ENCODE measurements at regions of chr3 and their contacts with region 1.

Region 1: GRCh38 chr3:99833617-99834205 is 16.0 kb downstream of the CMSS1 start:
- ATAC-seq: no peak
- H3K4me3 ChIP-seq: no peak overlapping the region
- H3K27ac ChIP-seq: no peak overlapping the region
- H3K4me1 ChIP-seq: peaks cover 2 to 5% of the 10 kb centered on the region in 2 donors

Region 2: GRCh38 chr3:98801043-98801747 is 1032.5 kb before region 1 on chr3:
- in situ Hi-C with region 1: no loop called
- ATAC-seq: peak in 1 of 8 experiments; percentile 88
- H3K4me3 ChIP-seq: no peak overlapping the region
- H3K27ac ChIP-seq: no peak overlapping the region
- H3K4me1 ChIP-seq: no peaks in the 10 kb centered on the region

Region 3: DNA sequence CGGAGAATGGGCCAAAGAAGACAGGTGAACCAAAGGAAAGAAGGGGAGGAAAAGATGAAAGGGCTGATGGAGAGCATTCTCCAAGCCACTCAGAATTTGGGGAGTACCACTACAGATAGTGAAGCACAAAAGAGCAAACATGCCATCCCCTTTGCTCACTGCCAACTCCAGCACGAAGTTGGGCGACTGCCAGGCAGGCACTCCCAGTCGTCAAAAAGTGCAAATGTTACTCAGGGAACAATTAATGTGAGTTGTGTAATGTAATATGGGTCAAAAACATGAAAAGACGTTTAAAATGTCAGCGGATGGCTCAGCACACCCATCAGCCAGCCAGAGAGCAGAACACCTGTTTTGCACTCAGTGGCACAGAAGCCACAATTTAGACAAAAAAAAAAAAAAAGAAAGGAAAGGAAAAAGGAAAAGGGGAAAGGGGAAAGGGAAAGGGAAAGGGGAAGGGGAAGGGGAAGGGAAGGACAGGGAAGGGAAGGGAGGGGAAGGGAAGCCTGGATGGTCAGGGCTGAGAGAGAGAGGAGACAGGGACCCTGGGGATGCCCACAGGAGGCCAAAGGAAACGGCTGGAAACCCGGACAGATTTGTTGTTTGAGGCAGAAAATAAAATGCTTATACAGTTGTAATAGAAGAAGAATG is 112.6 kb before region 1 on chr3:
- in situ Hi-C with region 1: no loop called
- ATAC-seq: peak in 3 of 8 experiments; percentile 17 to 43 (median 27)
- H3K4me3 ChIP-seq: no peak overlapping the region
- H3K27ac ChIP-seq: no peak overlapping the region
- H3K4me1 ChIP-seq: no peaks in the 10 kb centered on the region

Region 4: DNA sequence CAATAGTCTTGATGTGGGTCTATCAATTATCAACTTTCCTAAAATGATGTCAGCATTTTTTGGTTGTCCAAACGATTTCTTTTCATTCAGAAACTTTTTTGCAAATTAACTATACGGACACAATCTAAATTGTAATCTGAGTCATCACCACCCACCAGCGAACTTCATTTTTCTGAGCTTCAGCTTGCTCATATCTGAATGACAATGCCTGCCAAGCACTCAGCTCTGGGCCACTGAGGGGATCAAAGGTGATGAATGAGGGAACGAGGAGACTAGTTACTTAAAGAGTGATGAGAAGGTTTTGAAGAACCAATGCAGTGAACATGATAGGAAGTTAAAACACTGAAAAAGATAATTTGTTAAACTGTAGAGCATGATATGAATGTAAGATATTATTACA is 412.2 kb after region 1 on chr3:
- in situ Hi-C with region 1: loop called in 6 of 9 experiments (anchors 10 to 25 kb)
- ATAC-seq: peak in 1 of 8 experiments; percentile 37
- H3K4me3 ChIP-seq: no peak overlapping the region
- H3K27ac ChIP-seq: no peak overlapping the region
- H3K4me1 ChIP-seq: no peaks in the 10 kb centered on the region

Region 5: GRCh38 chr3:100254168-100254777 is 420.6 kb after region 1 on chr3:
- in situ Hi-C with region 1: loop called in 6 of 9 experiments (anchors 10 to 25 kb)
- ATAC-seq: peak; percentile 84 to 100 (median 90)
- H3K4me3 ChIP-seq: no peak overlapping the region
- H3K27ac ChIP-seq: no peak overlapping the region
- H3K4me1 ChIP-seq: no peaks in the 10 kb centered on the region

Region 6: DNA sequence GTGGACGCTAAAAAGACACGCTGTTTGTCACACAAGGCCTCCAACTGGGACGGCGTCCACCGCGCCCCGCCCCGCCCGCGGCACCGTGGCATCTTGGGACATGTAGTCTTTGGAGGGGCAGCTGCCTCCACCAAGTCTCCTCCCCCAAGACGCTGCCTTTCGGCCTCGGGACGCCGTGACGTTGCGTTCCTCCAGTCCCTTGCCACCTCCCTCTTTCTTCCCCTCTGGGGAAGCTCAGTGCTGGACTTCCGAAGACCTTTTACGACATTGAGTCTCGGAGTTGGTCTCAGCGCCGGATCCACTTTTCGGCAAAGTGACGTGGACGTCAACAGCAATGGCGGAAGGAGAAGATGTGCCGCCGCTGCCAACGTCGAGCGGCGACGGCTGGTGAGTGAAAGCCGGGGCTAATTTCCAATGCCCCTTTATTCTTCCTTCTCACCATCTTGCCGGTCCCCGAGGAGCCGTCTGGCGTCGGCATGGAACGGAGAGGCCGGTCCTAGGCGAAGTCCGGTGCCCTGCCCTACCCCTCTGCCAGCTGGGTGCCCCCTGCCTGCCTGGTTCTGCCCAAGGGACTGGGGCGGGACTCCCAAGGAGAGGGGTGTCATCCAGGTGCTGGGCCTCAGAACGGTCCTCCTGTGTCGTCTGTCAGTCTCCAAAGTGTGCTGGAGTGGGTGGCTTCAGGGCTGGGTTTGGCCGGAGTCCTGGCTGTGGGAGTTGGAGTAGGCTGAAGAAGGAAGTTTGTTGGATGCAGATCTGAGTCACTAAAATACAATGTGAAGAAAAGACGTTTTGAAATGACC is 427.2 kb after region 1 on chr3 and contains the start of gene TBC1D23:
- in situ Hi-C with region 1: loop called in 6 of 9 experiments (anchors 10 to 25 kb)
- ATAC-seq: peak; percentile 96 to 100 (median 99)
- H3K4me3 ChIP-seq: peak within 1 kb of the TSS; percentile 82 to 97 (median 89)
- H3K27ac ChIP-seq: peak within 1 kb of the TSS; percentile 93 to 98
- H3K4me1 ChIP-seq: peaks cover 10 to 16% of the 10 kb centered on the region in 2 donors
- total RNA-seq, gene TBC1D23: 24.5 to 52.3 (median 40.4) TPM

Region 7: DNA sequence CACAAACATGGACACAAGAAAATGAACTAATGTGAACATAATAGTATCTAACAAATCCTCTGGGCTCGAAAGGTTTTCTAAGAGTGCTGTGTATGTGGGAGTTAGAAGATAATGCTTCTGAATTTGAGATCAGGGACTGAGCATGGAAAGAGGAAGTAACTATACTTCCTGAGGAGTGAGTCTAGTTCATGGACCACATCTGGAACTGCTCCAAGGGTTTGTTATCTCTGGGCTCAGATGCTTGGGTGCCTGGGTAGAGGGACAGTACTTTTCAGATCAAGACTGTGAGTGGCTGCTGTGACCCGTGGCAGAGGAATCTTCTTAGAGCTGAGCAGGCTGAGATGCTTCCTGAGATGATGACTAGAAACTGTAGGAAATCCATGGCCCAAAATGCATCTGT is 455.6 kb after region 1 on chr3:
- in situ Hi-C with region 1: no loop called
- ATAC-seq: no peak
- H3K4me3 ChIP-seq: no peak overlapping the region
- H3K27ac ChIP-seq: no peak overlapping the region
- H3K4me1 ChIP-seq: no peaks in the 10 kb centered on the region

Measured in motor neuron (in vitro differentiated cells).